ENCODE measurements at regions of chr11 and their contacts with region 1.

Region 1: GRCh38 chr11:128039140-128040021 is 548.0 kb downstream of the ETS1 start:
- DNase-seq: peak; percentile 98
- H3K4me3 ChIP-seq: peak overlapping the region; percentile 24; the same call in 1 of the 2 replicates
- H3K27ac ChIP-seq: peak overlapping the region; percentile 70
- H3K4me1 ChIP-seq: peaks cover 38% of the 10 kb centered on the region
- H3K27me3 ChIP-seq: no peaks in the 10 kb centered on the region

Region 2: GRCh38 chr11:128157423-128158298 is 118.3 kb after region 1 on chr11:
- in situ Hi-C with region 1: loop called (anchors 25 kb)
- DNase-seq: peak; percentile 87
- H3K4me3 ChIP-seq: peak overlapping the region; percentile 66
- H3K27ac ChIP-seq: no peak overlapping the region
- H3K4me1 ChIP-seq: no peaks in the 10 kb centered on the region
- H3K27me3 ChIP-seq: no peaks in the 10 kb centered on the region

Region 3: GRCh38 chr11:128522055-128522942 is 482.9 kb after region 1 on chr11:
- in situ Hi-C with region 1: loop called (anchors 25 kb)
- DNase-seq: peak; percentile 99
- H3K4me3 ChIP-seq: peak overlapping the region; percentile 99
- H3K27ac ChIP-seq: peak overlapping the region; percentile 99
- H3K4me1 ChIP-seq: peaks cover 46% of the 10 kb centered on the region
- H3K27me3 ChIP-seq: no peaks in the 10 kb centered on the region

Measured in GM23248 (cell line).